OCI-LY7 (cell line): ENCODE measurements at regions of chr7 and their contacts with region 1.

Region 1: DNA sequence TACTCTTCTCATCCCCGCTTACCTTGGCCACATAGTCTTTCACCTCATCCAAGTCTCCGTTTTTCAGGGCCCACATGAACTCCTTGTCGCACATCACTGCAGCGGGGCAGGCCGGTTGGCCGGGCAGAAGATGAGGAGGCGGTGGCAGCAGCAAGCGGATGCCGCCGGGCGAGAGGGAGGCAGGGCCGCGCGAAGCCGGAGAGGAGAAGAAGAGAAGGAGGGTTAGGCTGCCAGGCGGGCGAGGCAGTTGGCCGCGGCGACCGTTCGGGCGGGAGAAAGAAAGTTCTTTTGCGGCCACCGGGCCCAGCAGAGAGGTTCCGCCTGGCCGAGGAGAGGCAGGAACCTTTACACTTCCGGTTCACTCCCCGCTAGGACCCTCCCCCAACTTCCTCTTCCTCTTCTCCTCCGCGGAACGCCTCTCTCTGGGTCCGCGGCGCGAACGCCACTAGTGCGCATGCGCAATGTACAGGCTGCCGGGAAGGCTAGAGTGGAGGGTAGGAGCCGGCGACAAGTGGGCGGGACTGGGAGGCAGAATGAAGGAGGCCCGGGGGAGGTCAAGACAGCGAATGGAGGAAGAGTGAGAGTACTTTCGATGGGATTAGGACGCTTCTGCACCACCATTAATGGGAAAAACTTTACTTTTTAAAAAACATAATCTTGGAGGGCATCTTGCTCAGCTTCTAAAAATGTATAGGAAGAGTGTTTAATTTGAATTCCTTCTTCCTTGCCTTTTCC is at the start of gene MTPN:
- DNase-seq: peak; percentile 98
- H3K4me3 ChIP-seq: peak within 1 kb of the TSS; percentile 97
- H3K27ac ChIP-seq: peak within 1 kb of the TSS; percentile 93
- H3K4me1 ChIP-seq: peaks cover 54% of the 10 kb centered on the region
- CTCF ChIP-seq: no peak
- total RNA-seq, gene MTPN: 83.9 and 91.3 TPM in 2 replicates

Region 2: DNA sequence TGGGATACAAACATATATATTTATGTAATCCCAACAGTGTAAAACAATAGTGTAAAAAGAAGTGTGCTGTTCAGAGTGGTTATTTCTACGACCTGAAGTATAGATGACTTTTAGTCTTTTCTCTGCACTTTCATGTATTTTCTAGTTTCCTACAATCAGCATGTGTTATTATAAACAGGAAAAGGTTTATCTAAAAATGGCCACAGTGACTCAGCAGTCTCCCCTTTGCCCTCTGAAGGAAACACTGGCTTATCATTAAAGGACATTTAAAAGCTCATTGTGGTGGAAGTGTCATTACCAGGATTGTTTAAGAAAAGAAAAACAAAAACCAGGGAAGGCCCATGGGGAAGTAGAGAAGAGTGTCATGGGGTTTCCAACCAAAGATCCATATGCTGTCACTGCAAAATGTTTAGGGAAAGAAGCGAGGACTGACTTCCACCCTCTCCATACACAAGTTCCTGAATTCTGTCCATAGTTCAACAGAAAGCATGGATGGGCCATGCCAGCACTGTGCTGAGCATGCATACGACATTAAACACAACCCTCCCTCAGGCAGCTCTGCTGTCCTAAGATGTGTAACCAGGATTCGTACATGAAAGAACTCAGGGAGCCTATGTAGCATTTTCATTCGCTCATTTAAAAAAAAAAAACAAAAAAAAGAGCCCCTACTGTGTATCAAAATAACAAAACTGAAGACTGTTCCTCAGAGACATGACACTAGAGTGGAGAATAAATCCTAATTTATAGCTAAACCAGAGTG is 816.9 kb before region 1 on chr7:
- CTCF ChIA-PET with region 1: no interaction called
- POLR2A ChIA-PET with region 1: no interaction called
- intact Hi-C with region 1: loop called (anchors 2 kb)
- DNase-seq: peak; percentile 29
- H3K4me3 ChIP-seq: no peak overlapping the region
- H3K27ac ChIP-seq: peak overlapping the region; percentile 64
- H3K4me1 ChIP-seq: peaks cover 25% of the 10 kb centered on the region
- CTCF ChIP-seq: no peak

Region 3: GRCh38 chr7:135509903-135510602 is 467.1 kb before region 1 on chr7 and contains the start of gene CNOT4:
- CTCF ChIA-PET with region 1: no interaction called
- POLR2A ChIA-PET with region 1: no interaction called
- intact Hi-C with region 1: loop called (anchors 5 kb)
- DNase-seq: peak; percentile 97
- H3K4me3 ChIP-seq: peak within 1 kb of the TSS; percentile 97
- H3K27ac ChIP-seq: peak within 1 kb of the TSS; percentile 71
- H3K4me1 ChIP-seq: peaks cover 28% of the 10 kb centered on the region
- CTCF ChIP-seq: no peak
- total RNA-seq, gene CNOT4: 18.7 and 21.8 TPM in 2 replicates

Region 4: DNA sequence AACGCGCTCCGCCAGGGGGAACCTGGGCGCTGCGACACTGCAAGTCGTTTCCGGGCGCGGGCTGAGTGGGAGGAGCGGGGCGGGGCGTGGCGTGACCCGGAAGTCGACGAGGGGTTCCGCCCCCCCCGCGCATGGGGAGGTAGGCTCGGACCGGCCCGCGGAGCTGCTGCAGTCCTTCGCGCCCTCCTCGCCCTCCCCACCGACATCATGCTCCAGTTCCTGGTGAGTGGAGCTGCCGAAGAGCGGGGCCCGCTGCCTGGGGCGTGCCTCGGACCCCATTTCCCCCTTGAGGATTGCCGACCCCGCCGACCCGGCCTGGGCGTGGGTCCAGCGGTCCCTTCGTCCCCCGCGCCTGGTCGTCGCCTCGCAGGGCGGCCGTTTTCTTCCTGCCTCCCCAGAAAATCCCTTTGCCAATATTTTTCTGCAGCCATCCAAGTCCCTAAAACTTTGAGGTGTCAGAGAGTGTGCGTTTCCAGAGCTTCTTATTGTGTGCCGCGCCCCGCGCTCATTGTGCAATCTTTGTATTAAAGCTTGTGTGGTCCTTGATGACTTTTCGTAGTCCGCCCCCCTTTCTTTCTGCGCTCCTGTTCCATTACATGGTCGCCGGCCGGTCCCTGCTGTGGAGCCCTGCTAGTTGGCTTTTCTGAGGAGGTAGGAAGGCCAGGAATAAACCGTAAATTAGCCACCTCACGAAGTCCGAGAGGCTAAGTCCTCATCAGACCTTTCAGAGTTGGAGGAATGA is 314.6 kb before region 1 on chr7 and contains the start of gene STMP1:
- CTCF ChIA-PET with region 1: no interaction called
- POLR2A ChIA-PET with region 1: interaction called, 3 read pairs
- intact Hi-C with region 1: loop called (anchors 5 kb)
- DNase-seq: peak; percentile 94
- H3K4me3 ChIP-seq: peak within 1 kb of the TSS; percentile 95
- H3K27ac ChIP-seq: peak within 1 kb of the TSS; percentile 37
- H3K4me1 ChIP-seq: peaks cover 19% of the 10 kb centered on the region
- CTCF ChIP-seq: 0 out of 2 replicates have a peak, but pooled peaks have one; percentile 3
- total RNA-seq, gene STMP1: 7.4 and 8.0 TPM in 2 replicates

Region 5: DNA sequence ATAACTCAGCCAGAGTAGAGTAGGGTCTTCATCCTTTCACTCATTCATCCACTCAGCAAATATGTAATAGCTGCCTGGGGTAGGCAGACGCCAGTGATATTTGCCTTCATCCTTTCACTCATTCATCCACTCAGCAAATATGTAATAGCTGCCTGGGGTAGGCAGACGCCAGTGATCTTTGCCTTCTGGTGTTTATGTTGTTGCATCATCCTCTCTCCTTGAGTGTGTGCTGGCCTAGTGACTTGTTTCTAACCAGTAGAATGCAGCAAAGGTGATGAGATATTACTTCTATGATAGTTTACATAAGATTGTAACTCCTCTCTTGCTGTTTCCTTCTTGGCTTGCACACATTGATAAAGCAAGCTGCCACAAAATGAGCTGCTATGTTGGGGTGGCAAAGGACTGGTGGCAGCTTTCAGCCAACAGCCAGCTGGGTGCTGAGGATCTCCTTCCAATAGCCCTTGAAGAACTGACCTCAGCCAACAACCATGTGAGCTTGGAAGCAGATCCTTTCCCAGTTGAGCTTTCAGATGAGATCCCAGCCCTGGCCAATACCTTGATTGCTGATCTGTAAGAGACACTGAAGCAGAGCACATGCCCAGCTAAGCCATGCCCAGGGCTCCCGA is 23.2 kb after region 1 on chr7:
- CTCF ChIA-PET with region 1: no interaction called
- POLR2A ChIA-PET with region 1: interaction called, 18 read pairs
- intact Hi-C with region 1: no loop called
- DNase-seq: no peak
- H3K4me3 ChIP-seq: no peak overlapping the region
- H3K27ac ChIP-seq: no peak overlapping the region
- H3K4me1 ChIP-seq: no peaks in the 10 kb centered on the region
- CTCF ChIP-seq: no peak